Right ventricle myocardium inferior (tissue), 1 donor: ENCODE measurements at regions of chr7 and their contacts with region 1.

Region 1: DNA sequence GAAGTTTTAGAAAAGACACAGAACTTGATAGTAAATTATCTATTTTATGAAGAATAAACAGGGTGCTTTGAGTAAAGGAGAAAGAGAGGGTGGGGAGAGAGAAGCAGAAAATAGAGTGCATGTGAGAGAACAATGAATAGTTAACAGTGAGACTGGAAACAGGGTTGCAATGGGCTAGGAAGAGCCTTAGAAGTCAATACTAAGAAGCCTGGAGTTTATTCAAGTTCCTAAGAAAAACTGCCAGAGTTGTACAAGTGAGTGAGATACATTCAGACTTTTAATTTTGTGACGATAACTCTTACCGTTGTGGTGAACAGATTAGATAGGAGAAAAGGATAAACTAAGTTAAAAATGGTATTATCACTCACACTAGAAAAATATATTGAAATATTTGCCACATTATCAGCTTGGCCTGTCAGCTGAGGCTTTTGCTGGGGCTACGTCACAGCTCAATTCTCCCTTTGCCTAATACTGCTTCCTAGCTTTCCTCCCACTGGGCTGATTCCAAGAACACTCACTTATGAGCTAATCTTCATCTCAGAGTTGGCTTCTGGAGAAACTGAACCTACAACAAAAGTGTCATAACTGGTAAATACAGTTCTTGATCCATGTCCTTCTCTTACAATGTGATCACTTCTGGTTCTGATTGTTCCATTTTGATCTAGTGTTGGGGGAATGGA is 92.7 kb downstream of the SEMA3D start:
- DNase-seq: no peak
- ATAC-seq: peak; percentile 93

Region 2: DNA sequence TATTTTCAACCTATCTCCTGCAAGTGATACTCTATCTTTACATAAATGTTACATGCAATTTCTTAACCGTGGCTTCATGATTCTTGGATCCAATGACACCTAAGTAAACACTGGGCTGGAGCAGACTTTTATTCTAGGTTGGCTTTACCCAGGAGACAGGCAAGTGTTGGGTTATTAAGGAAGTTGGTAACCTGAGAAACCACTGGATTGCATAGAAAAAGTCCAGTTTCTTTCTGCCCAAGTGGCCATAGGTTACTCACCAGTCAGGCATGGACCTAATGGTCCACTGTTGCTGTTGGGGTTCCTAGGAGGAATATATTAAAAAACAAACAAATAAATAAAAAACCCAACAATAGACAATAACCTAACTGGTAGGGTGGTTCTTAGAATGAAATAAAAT is 20.2 kb before region 1 on chr7:
- intact Hi-C with region 1: loop called (anchors 1 kb)
- DNase-seq: no peak
- ATAC-seq: no peak